Posterior cingulate gyrus (tissue), 11 donors: ENCODE measurements at regions of chr11 and their contacts with region 1.

Region 1: DNA sequence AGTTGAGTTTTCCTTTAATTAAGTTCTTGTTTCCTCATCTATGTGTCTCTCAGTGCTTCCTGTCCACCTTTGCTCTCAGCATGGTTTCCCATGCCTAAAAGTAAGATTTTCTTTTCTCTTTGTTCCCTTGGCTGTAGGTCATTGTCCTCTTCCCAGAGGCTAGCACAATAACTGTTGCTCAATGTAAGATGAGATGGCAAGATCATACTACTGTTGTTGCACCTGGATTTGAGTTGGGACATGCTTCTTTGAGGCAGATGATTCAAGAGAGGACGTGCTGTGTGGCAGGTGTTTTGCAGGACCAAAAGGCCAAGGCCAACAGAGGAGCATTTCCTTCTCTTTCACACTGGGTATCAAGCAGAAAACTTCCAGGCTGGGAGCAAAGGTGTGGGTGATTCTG is 11.3 kb upstream of the NELL1 start:
- DNase-seq: no peak

Region 2: GRCh38 chr11:20712912-20713311 is 54.8 kb after region 1 on chr11:
- intact Hi-C with region 1: no loop called
- DNase-seq: peak in 1 of 10 donors; percentile 30

Region 3: GRCh38 chr11:20795005-20795404 is 136.9 kb after region 1 on chr11:
- intact Hi-C with region 1: no loop called
- DNase-seq: no peak

Region 4: GRCh38 chr11:22130462-22131053 is 1472.4 kb after region 1 on chr11:
- intact Hi-C with region 1: loop called (anchors 10 kb)
- DNase-seq: no peak